Gastrocnemius medialis (tissue), 4 donors: ENCODE measurements at regions of chr9 and their contacts with region 1.

Region 1: DNA sequence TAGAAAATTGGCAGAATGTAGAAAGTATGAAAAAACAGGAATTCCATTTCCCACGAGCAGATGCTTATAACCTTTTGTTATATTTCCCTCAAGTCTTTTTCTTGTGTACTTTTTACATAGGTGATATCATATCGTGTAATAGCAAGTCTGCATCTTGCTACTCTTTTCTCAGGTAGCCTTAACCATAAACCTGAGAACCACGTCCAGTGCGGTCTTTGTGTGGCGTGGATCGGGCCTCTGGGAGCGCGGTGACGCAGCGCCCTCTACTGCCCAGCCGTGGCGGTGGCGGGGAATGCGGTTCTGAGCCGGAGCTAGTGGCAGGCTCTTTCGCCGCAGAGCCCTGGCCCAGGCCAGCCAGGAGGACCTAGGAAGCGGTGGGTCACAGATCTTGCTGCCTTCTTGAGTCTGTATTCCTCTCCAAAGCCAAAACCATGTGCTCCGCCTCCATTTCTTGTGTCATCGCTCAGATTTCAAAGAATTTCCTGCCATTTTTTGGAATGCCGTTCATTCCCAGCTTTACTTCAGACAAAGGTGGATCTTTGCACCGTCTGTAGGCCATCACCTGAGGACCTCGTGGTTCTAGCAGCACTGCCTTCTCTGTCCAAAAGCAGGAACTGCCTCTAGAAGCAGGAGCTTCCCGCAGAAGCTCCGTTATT is 71.9 kb downstream of the MVB12B start:
- DNase-seq: peak; percentile 46 to 70
- ATAC-seq: peak; percentile 70 to 71
- H3K4me3 ChIP-seq: no peak overlapping the region
- H3K27ac ChIP-seq: no peak overlapping the region
- H3K4me1 ChIP-seq: peaks cover 17 to 21% of the 10 kb centered on the region in 2 donors
- H3K27me3 ChIP-seq: no peaks in the 10 kb centered on the region
- CTCF ChIP-seq: peak; percentile 93 to 99 (median 96)
- POLR2A ChIP-seq: no peak

Region 2: GRCh38 chr9:126165755-126166154 is 232.8 kb before region 1 on chr9:
- in situ Hi-C with region 1: no loop called
- intact Hi-C with region 1: no loop called
- DNase-seq: no peak
- ATAC-seq: no peak
- H3K4me3 ChIP-seq: no peak overlapping the region
- H3K27ac ChIP-seq: no peak overlapping the region
- H3K4me1 ChIP-seq: no peaks in the 10 kb centered on the region
- H3K27me3 ChIP-seq: peaks cover 0 to 2% (median 0%) of the 10 kb centered on the region in 3 donors
- CTCF ChIP-seq: no peak
- POLR2A ChIP-seq: no peak

Region 3: DNA sequence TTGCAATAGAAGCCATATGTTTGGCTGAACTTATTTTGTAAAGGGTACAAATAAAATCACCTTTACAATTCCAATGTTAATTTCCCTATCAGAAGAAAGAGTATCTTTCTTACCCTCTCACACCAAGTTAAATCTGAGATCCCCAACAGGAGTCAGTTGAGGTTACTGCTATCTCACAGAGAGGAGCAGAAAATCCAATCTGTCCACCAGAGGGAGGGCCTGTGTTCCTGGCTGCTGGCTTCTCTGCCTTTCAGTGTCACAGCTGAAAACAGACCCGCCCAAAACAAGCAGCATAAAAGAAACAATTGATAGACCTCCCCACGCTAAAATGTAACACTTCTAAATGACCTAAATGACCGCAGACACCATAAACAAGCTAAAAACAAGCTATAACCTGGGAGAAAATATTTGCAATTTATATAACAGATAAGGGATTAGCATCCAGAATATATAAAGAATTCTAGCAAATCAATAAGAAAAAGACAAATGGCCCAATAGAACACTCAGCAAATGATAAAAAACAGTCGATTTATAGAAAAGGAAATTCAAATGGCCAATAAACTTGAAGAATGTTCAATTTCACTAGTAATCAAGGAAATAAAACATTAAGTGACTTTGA is 96.4 kb before region 1 on chr9:
- in situ Hi-C with region 1: loop called in 1 of 4 experiments (anchors 5 kb)
- intact Hi-C with region 1: loop called (anchors 1 kb)
- DNase-seq: peak; percentile 22 to 53
- ATAC-seq: peak; percentile 60 to 71
- H3K4me3 ChIP-seq: no peak overlapping the region
- H3K27ac ChIP-seq: no peak overlapping the region
- H3K4me1 ChIP-seq: no peaks in the 10 kb centered on the region
- H3K27me3 ChIP-seq: peaks cover 0 to 5% (median 0%) of the 10 kb centered on the region in 3 donors
- CTCF ChIP-seq: peak; percentile 46 to 69 (median 62)
- POLR2A ChIP-seq: no peak

Region 4: DNA sequence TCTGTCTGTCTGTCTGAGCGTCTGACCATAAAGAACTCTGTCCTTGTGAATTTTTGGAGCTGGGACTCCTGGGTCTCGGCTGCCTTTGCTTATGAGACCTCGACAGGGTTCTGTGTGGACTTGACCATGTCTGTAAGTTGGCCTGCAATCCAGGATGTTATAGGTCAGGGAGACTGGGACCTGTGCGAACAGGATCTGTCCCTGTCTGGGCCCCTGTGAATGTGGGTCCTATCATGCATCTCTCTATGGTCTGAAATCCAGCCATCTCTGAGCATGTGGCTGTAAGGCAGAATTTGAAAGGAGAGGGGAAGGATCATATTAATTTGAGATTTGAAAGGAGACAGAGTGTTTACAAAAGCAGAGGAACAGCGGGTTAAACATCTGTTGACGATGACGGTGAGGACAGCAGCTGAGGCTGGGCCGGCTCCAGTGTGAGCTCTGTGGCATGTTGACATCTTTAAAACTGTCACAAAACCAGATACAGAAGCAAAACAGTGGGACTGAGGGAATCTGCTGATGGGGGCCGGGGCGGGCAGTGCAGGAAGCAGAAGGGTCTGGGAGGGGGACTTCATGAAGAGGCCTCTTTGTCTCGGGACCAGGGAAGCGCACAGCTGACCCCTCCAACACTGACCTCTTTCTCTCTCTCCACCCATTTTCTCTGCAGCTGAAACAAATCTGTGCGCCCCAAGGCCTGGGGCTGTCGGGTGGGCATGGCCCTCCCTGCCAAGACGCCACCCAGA is 91.0 kb before region 1 on chr9:
- in situ Hi-C with region 1: loop called in 1 of 4 experiments (anchors 5 kb)
- intact Hi-C with region 1: loop called (anchors 1 kb)
- DNase-seq: no peak
- ATAC-seq: no peak
- H3K4me3 ChIP-seq: no peak overlapping the region
- H3K27ac ChIP-seq: no peak overlapping the region
- H3K4me1 ChIP-seq: no peaks in the 10 kb centered on the region
- H3K27me3 ChIP-seq: no peaks in the 10 kb centered on the region
- CTCF ChIP-seq: no peak
- POLR2A ChIP-seq: no peak

Region 5: DNA sequence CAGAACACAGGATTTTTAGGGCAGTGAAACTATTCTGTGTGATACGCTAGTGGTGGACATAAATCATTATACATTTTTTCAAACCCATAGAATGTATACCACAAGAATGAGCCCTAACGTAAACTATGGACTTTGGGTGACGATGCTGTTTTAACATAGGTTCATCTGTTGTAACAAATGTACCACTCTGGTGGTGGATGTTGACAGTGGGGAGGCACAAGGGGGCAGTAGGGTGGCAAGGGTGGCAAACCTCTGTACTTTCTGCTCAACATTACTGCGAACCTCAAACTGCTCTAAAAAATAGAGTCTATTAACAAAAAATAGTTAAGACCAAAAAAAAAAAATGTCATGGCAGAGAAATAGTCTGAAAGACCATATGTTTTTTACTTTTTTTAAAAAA is 81.0 kb before region 1 on chr9:
- in situ Hi-C with region 1: loop called in 3 of 4 experiments (anchors 5 kb)
- intact Hi-C with region 1: loop called (anchors 1 kb)
- DNase-seq: peak; percentile 44 to 48
- ATAC-seq: peak; percentile 73 to 77
- H3K4me3 ChIP-seq: no peak overlapping the region
- H3K27ac ChIP-seq: no peak overlapping the region
- H3K4me1 ChIP-seq: no peaks in the 10 kb centered on the region
- H3K27me3 ChIP-seq: no peaks in the 10 kb centered on the region
- CTCF ChIP-seq: peak; percentile 52 to 71 (median 65)
- POLR2A ChIP-seq: no peak

Region 6: DNA sequence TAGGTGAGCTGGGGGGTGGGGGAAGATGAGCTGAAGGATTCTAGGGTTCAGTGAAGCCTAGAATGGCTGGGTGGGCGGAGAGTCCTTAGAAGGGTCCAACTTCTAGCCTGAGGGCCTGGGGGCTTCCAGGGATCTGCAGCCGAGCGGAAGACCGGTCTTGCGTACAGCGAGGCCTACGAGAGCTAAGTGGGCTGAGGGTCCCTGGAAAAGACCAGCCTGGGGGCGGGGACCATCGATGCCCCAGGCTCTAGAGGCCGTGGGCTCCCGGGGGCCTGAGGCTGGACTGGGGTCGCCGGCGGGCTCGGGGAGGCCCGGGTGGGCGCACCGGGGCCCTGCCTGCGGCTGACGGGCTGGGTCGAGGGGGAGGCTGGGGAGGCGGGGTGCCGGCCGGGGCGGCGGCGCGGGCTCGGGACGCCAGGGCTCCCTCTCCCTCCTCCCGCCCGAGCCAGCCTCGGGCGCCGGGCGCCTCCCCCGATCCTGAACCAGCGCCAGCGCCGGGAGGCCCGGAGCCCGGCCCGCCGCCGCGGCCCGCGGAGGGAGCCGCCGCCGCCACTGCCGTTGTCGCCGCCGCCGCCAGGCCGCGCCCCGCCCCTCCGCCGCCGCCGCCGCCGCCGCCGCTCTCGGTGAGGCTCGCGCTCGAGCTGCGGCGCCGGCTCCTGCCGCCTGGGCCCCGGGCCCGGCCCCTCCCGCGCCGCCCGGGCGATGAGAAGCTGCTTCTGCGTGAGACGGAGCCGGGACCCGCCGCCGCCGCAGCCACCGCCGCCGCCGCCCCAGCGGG is 72.1 kb before region 1 on chr9 and contains the start of gene MVB12B:
- in situ Hi-C with region 1: no loop called
- intact Hi-C with region 1: loop called (anchors 2 kb)
- DNase-seq: peak in 1 of 2 donors; percentile 26
- ATAC-seq: peak; percentile 42 to 56
- H3K4me3 ChIP-seq: peak within 1 kb of the TSS; percentile 56 to 67 (median 60)
- H3K27ac ChIP-seq: peak within 1 kb of the TSS; percentile 90 to 97 (median 93)
- H3K4me1 ChIP-seq: peaks cover 40 to 41% of the 10 kb centered on the region in 2 donors
- H3K27me3 ChIP-seq: no peaks in the 10 kb centered on the region
- CTCF ChIP-seq: no peak
- POLR2A ChIP-seq: no peak
- total RNA-seq, gene MVB12B: 6.1 to 18.0 (median 13.2) TPM